Tibial artery (tissue), 4 donors: ENCODE measurements at regions of chr1 and their contacts with region 1.

Region 1: DNA sequence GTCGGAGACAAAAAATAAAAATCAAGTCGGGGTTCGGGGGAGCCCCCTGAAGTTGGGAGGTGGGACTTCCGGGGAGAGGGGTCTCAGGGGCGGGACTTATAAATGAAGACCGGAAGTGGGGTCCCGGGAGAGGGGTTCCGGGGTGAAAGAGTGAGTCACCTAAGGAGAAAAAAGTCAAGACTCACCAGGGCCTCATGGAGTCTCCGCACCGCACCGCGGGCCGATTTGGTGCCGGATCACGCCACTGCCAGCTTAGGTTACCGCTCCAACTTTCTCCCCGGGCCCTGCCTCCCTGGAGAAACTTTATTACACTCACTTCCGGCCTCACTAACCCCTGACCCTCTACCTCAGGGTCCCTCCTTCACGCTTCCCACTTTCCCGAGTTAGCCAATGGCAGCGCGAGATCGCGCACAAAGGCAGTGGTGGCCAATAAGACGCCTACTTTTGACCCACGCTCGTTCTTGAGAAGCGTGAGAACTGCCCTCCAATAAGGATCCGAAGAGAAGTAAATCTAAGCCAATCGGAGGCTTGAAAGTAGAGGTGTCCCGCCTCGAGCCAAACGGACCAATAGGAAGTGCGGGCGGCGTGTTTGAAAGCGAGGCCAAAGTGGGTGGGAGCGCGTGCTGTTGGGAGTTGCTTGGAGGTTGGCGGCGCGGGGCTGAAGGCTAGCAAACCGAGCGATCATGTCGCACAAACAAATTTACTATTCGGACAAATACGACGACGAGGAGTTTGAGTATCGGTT is at the start of gene CKS1B:
- DNase-seq: peak; percentile 98 to 99
- H3K4me3 ChIP-seq: peak within 1 kb of the TSS; percentile 68 to 76
- H3K27ac ChIP-seq: peak within 1 kb of the TSS; percentile 95 to 97
- H3K4me1 ChIP-seq: peaks cover 0 to 54% (median 46%) of the 10 kb centered on the region in 4 donors
- H3K27me3 ChIP-seq: no peaks in the 10 kb centered on the region
- CTCF ChIP-seq: peak in 1 of 2 experiments; percentile 8

Region 2: DNA sequence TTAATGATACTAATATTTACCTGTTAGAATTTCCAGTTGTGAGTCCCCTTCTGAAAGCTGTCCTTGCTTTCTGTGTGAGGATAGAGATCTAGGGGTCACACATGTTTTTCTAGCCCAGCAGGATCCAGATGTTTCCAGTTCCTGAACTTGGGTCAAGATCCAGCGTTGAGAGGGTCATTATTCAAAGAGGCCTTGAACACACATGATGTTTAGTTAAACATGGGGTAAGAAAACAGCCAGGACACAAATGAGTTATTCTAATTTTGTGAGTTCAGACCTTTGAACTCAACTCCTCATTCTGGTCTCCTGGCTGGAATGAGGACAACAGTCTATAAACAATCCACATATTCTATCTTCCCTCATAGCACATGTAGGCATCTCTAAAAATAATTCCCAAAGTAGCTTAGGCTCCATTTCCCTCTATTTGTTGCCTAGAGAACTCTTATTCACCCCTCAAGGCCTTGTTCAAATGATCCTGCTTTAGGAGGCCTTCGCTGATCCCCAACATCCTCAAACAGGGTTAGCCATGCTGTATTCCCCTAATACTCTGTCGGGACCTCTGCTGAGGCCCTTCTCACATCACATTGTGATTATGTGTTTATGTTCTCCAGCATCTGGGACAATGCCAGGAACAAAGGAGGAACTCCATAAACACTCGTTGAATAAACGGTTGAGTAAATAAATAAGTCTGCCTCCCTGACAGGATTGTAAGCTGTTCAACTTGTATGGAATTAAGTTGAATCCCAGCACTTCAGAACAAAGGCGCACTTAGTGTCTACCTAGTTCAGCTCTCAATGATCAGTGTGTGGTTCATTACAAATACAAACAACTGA is 89.2 kb before region 1 on chr1:
- intact Hi-C with region 1: no loop called
- DNase-seq: no peak
- H3K4me3 ChIP-seq: no peak overlapping the region
- H3K27ac ChIP-seq: no peak overlapping the region
- H3K4me1 ChIP-seq: no peaks in the 10 kb centered on the region
- H3K27me3 ChIP-seq: no peaks in the 10 kb centered on the region
- CTCF ChIP-seq: no peak

Region 3: DNA sequence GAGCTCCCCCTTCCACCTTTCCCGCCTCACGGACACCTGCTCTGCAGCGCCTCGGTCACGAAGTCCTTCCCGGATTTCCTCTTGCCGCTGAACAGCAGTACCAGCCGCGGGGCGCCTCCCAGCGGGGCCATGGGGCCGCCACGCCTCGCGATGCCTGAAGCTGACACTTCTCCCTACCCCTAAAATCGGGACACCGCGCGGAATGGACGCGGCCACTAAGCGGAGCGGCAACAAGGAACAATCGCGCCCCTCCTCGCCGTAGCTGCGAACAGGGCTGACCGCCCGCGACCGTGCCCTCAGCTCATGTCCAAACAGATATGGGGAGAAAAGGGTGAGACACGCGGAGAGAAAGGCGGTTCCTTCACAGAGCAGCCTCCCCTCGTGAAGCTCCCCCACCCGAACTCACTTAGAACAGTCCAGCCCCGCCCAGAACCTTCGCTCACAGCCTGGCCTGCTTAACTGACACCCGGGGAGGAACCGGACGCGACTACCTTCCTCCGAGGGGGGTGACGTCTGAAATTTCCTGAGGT is 37.6 kb before region 1 on chr1 and contains the start of gene PMVK:
- intact Hi-C with region 1: loop called (anchors 2 kb)
- DNase-seq: peak; percentile 97 to 98
- H3K4me3 ChIP-seq: peak within 1 kb of the TSS; percentile 62 to 77
- H3K27ac ChIP-seq: peak within 1 kb of the TSS; percentile 94 to 97
- H3K4me1 ChIP-seq: peaks cover 0 to 36% (median 25%) of the 10 kb centered on the region in 4 donors
- H3K27me3 ChIP-seq: no peaks in the 10 kb centered on the region
- CTCF ChIP-seq: peak; percentile 19 to 35

Region 4: GRCh38 chr1:154988120-154988957 is 14.1 kb after region 1 on chr1:
- intact Hi-C with region 1: no loop called
- DNase-seq: no peak
- H3K4me3 ChIP-seq: no peak overlapping the region
- H3K27ac ChIP-seq: no peak overlapping the region
- H3K4me1 ChIP-seq: peaks cover 0 to 12% (median 9%) of the 10 kb centered on the region in 4 donors
- H3K27me3 ChIP-seq: no peaks in the 10 kb centered on the region
- CTCF ChIP-seq: no peak

Region 5: DNA sequence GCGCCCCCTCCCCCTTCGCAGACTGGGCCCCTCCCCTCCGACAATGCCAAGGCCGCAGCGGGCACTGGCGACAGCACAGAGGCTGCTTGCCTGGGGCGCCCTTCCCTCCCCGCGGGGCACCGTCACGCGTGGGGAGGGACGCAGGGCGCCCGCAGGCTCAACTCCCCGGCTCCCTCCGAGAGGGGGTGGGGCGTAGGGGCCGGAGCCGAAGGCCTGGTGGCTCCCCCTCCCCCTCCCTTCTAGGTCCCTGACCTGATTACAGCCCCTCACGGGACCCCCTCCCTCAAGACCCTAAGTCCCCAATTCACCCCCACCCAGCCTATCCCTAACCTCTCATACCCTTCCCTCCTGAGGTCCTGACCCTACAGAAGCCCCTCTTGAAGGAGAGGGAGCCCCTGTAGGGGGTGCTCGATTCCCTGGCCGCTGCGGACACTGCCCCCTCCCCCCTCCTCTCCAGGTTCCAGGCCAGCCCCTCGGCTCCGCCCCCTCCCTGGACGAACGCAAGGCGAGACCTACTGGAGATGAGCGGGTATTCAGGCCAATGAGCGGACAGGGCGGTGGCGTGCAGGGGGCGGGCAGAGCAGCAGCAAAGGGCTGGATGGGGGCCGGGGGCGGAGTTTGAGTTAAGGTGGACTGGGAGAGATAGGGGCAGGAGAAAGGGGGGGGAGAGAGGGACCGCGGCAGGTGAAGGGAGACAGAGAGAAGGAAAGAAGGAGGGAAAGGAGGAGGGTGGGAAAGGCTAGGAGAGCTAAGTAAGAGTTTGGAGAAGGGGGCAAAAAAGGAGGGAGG is 27.6 kb after region 1 on chr1:
- intact Hi-C with region 1: loop called (anchors 1 kb)
- DNase-seq: peak; percentile 100
- H3K4me3 ChIP-seq: peak overlapping the region; percentile 87 to 96
- H3K27ac ChIP-seq: peak overlapping the region; percentile 95 to 96
- H3K4me1 ChIP-seq: peaks cover 0 to 49% (median 47%) of the 10 kb centered on the region in 4 donors
- H3K27me3 ChIP-seq: no peaks in the 10 kb centered on the region
- CTCF ChIP-seq: peak; percentile 13 to 33